Activated naive CD4-positive, alpha-beta T cell treated with anti-CD3 and anti-CD28 coated beads for 36 hours (primary cell): ENCODE measurements at regions of chr1 and their contacts with region 1.

Region 1: DNA sequence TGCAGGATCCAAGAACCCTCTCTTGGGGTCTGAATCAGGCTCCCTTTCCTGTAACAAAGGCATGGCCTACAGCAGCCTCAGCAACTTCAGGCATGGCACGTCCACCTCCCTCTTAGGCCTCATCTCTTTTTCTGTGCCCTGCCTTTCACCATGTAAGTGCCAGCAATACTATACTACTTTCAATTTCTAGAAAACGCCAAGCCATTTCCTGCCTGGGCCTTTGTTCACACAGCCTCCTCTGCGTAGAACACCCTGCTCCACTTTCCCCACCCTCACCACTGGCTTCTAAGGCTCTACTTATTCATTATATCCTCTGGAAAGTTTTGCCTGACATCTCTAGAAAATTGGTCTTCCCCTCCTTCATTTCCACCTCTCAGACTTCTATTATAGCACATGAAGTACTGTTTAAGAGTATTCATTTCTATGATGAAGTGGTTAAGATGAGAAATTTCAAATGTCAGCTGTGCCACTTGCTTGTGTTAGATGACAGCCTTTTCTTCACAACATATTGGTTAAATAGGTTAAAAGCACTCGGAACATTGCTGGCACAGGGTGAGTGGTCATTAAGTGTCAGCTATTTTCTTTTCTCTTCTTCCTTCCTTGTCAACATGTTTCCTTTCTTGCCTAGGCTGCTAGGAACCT is 41.6 kb upstream of the VWA5B1 start:
- DNase-seq: peak; percentile 86
- H3K4me3 Mint-ChIP-seq: peak overlapping the region; percentile 32
- H3K27ac Mint-ChIP-seq: peak overlapping the region; percentile 95
- H3K4me1 Mint-ChIP-seq: peaks cover 25% of the 10 kb centered on the region
- H3K27me3 Mint-ChIP-seq: no peaks in the 10 kb centered on the region

Region 2: DNA sequence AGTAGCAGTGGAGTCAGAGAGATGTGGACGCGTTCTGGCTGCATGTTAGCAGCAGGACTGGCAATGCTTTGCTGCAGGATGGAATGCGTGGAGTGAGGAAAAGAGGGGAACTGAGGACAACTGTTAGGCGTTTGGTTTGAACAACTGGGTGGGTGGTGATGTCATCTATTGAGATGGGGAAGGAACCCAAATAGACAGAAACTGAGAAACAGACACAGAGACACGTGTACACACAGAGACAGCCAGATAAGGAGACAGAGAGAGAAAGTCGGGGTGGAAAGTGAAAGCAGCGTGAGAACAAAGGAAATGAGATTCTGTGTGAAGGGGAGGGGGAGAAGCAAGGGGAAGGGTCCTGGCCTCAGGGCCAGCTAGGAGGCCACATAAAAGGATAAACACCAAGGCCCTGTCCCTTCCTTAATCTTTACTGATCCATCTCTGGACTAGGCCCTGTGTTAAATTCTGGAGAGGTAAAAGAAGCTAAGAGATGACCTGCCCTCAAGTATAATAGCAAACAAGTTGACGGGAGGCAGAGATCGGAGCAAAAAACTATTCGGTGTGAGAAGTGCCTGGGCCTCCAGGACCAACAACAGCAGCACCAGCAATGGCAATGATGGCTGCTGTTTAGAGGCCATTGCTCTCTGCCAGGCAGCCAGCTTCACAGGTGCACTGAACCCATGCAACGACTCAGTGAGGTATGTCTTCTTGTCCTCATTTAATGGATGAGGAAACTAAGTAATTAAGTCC is 73.2 kb after region 1 on chr1:
- CTCF ChIA-PET with region 1: no interaction called
- intact Hi-C with region 1: loop called (anchors 1 kb)
- DNase-seq: peak; percentile 63
- H3K4me3 Mint-ChIP-seq: peak overlapping the region; percentile 7
- H3K27ac Mint-ChIP-seq: peak overlapping the region; percentile 73
- H3K4me1 Mint-ChIP-seq: peaks cover 28% of the 10 kb centered on the region
- H3K27me3 Mint-ChIP-seq: peaks cover 2% of the 10 kb centered on the region